BJ (cell line): ENCODE measurements at regions of chr5 and their contacts with region 1.

Region 1: DNA sequence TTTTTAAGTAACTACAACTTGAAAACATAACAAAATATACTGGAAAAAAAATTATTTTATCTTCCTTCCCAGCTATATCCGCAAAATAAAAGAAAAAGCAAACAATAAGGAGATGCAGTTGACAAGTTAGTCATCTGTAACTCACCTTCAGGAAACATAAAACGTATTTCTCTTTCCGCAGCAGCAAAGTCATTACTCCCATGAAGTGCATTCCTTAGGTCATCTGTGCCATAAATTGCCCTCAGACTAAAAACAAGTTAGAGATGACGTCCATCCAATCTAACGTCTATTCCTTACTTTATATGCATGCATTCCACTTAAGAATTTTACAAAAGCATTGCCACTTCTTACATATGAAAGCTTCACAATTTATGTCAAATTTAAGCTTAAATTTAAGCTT is 10.9 kb downstream of the NME5 start:
- DNase-seq: no peak
- H3K4me3 ChIP-seq: no peak overlapping the region
- H3K27me3 ChIP-seq: no peaks in the 10 kb centered on the region
- CTCF ChIP-seq: no peak

Region 2: DNA sequence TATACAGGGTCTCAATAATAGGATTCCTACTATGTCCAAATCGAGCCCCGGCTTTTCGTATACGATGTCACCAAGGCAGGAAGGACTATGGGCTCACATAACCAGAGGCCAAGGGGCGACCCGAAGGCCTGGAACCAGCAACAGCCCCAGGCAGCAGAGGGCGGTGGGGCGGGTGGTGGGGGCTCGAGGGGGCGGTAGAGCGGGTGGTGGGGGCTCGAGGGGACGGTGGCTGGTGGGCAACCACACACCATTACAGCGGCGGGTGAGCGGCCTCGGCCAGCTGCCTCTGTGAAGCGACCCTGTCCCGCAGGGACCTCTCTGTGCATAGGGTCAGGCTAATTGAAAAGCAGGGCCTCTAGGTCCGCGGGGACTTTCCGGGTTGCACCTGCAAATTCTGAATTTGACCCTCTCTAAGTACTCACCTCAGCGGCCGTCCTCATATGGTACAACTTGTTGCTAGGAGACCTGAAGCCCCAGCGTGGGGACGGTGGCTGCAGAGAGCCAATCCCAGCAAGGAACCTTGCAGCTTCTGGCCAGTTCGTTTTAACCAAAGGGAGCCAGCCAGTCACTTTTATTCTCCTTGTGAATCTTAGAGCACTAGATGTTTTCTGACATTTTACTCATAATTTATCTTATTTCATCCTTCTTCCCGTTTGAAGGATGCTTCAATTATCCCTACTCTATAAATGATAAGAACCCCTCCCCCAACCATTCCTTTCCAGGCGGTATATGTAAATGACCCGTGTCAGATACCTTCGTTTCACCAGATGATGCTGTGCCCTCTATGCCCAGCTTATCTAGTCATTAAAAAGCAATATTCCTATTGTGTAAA is 10.8 kb after region 1 on chr5 and contains the start of gene NME5:
- CTCF ChIA-PET with region 1: interaction called, 10 read pairs
- POLR2A ChIA-PET with region 1: no interaction called
- DNase-seq: no peak
- H3K4me3 ChIP-seq: peak within 1 kb of the TSS; percentile 59
- H3K27me3 ChIP-seq: no peaks in the 10 kb centered on the region
- CTCF ChIP-seq: no peak
- polyA plus RNA-seq, gene NME5: 0.31 and 1.3 TPM in 2 replicates

Region 3: DNA sequence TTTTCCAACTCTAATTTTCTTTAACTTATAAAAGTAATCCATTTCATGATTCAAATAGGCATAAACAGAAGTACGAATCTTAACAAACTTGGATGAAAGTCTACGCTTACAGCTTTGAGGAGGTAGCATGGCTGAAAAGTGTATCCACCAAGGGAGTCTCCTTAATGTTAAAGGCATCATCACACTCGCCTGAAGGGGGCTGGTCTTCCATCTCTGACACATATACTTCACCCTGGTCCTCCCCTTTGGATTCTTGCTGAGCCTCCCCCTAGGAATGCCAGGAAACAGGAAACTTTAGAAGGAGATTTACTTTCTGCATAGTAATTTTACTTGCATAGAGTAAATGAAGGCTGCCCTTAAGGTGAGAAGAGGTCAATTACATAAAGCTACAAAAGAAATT is 21.2 kb after region 1 on chr5:
- CTCF ChIA-PET with region 1: interaction called, 11 read pairs
- POLR2A ChIA-PET with region 1: no interaction called
- DNase-seq: no peak
- H3K4me3 ChIP-seq: no peak overlapping the region
- H3K27me3 ChIP-seq: no peaks in the 10 kb centered on the region
- CTCF ChIP-seq: no peak

Region 4: DNA sequence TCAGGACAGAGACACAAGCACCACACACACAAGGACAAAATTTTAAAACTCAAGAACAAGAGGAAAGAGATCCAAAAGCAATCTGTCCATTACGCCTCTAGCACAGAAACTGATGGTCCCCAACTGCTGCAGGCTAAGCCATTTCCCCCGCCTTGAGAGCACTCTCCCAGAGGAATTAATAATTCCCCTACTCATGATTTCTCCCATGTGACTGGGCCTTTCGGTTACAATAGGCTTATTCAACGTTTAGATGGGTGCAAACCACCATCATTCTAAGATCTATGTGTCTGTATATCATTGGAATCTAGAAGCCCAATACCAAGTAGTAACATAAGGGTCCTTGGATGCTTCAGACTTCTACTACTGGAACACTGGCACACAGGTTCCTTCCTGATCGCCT is 31.3 kb after region 1 on chr5:
- CTCF ChIA-PET with region 1: no interaction called
- POLR2A ChIA-PET with region 1: no interaction called
- DNase-seq: no peak
- H3K4me3 ChIP-seq: no peak overlapping the region
- H3K27me3 ChIP-seq: no peaks in the 10 kb centered on the region
- CTCF ChIP-seq: no peak